ENCODE measurements at regions of chr1 and their contacts with region 1.

Region 1: DNA sequence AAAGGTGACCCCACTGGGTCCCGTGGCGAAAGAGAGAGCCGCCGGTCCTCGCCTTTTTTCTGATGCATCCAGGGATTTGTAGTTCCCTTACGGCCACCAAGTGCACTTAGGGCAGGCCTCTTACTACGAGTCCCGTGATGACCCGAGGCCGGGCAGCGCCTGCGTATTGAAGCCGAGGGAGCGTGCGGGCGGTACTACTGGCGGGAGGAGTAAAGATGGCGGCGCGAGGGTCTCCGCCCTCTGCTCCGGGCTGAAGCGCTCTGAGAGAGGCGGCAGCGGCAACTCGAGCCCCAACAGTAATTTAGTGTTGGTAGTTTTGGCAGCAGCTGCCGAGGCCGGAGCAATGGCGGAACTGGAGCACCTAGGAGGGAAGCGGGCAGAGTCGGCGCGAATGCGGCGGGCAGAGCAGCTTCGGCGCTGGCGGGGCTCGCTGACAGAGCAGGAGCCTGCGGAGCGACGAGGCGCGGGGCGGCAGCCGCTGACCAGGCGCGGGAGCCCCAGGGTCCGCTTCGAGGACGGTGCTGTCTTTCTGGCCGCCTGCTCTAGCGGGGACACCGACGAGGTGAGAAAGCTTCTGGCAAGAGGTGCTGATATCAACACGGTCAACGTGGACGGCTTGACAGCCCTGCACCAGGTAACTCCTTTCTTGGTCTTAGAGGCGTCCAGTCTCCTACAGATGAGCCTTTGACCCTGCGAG is at the start of gene PPP1R12B:
- DNase-seq: peak; percentile 90 to 98 (median 95)
- ATAC-seq: peak; percentile 96
- H3K4me3 ChIP-seq: peak within 1 kb of the TSS; percentile 89 to 96
- H3K4me3 Mint-ChIP-seq: peak within 1 kb of the TSS; percentile 86
- H3K27ac ChIP-seq: peak within 1 kb of the TSS; percentile 61 to 68
- H3K27ac Mint-ChIP-seq: peak within 1 kb of the TSS; percentile 92
- H3K4me1 ChIP-seq: peaks cover 17% of the 10 kb centered on the region
- H3K4me1 Mint-ChIP-seq: peaks cover 38% of the 10 kb centered on the region
- H3K27me3 ChIP-seq: no peaks in the 10 kb centered on the region
- H3K27me3 Mint-ChIP-seq: no peaks in the 10 kb centered on the region
- CTCF ChIP-seq: no peak
- total RNA-seq, gene PPP1R12B: 11.6 to 12.3 TPM

Region 2: DNA sequence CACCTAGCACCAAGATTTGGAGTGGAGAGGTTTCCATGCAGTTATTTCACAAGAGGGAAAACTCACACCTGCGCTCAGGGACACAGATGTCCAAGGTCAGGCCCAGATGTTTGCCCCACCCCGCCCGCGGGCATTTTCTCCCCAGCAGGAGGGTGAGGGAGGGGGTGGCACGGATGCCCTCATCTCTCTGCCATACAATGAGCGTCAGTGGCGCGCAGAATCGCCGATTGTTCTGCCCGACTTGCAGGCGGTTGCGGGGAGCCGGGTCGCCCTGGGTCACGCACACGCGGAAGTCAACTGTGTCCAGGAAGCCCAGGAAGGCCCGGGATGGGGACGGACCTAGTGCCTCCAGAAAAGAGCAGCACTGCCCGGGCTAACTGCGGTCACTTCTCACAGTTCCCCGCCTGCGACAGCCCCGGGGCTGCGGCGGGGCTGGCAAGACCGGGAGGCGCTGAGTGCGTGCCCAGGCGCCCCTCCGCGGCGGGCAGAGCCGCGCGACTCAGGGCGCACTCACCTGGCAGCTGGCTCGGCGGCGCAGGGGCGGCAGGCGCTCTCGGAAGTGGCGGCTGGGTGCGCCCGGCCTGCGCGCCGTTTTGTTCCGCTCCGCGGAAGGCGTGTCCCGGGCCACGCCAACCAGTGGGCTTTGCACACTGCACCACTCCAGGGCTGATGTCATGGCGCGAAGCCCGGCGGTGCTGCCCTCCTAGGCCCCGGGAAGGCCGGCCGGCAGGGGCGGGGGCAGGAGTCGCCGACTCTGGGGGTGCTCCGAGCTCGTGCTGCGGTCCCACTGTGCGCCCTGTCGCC is 841.9 kb before region 1 on chr1 and contains the start of gene CSRP1:
- CTCF ChIA-PET with region 1: no interaction called
- POLR2A ChIA-PET with region 1: no interaction called
- intact Hi-C with region 1: loop called in 1 of 2 experiments (anchors 10 kb)
- DNase-seq: peak; percentile 51 to 88 (median 78)
- ATAC-seq: peak; percentile 96
- H3K4me3 ChIP-seq: peak within 1 kb of the TSS; percentile 77 to 94
- H3K4me3 Mint-ChIP-seq: peak within 1 kb of the TSS; percentile 87
- H3K27ac ChIP-seq: peak within 1 kb of the TSS; percentile 65 to 70
- H3K27ac Mint-ChIP-seq: peak within 1 kb of the TSS; percentile 88
- H3K4me1 ChIP-seq: peaks cover 26% of the 10 kb centered on the region
- H3K4me1 Mint-ChIP-seq: peaks cover 50% of the 10 kb centered on the region
- H3K27me3 ChIP-seq: no peaks in the 10 kb centered on the region
- H3K27me3 Mint-ChIP-seq: no peaks in the 10 kb centered on the region
- CTCF ChIP-seq: no peak
- total RNA-seq, gene CSRP1: 31.6 to 33.9 TPM

Region 3: DNA sequence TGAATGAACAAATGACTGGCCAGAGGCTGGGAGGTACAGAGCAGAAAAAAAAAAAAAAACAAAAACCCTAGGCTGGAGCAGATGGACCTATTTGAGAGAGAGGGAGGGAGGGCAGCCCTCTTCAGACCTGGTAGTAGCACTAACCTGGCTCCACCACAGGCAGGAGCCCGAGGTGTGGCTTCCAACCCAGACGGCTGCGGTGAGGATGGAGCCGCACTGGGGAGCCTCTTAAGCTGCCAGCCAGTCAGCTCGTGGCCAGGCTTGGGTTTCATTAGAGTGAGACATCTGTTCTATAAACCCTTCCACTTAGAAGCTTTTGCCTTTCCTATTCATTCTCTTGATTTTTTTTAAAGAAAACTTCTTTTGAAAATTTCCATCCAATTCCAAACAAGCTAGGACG is 138.3 kb before region 1 on chr1:
- CTCF ChIA-PET with region 1: no interaction called
- POLR2A ChIA-PET with region 1: no interaction called
- intact Hi-C with region 1: no loop called
- DNase-seq: peak in 2 of 9 experiments; percentile 44 to 60
- ATAC-seq: peak; percentile 38
- H3K4me3 ChIP-seq: no peak overlapping the region
- H3K4me3 Mint-ChIP-seq: no peak overlapping the region
- H3K27ac ChIP-seq: no peak overlapping the region
- H3K27ac Mint-ChIP-seq: no peak overlapping the region
- H3K4me1 ChIP-seq: no peaks in the 10 kb centered on the region
- H3K4me1 Mint-ChIP-seq: peaks cover 9% of the 10 kb centered on the region
- H3K27me3 ChIP-seq: peaks cover 4 to 7% of the 10 kb centered on the region in 2 experiments
- H3K27me3 Mint-ChIP-seq: peaks cover 37% of the 10 kb centered on the region
- CTCF ChIP-seq: no peak

Region 4: DNA sequence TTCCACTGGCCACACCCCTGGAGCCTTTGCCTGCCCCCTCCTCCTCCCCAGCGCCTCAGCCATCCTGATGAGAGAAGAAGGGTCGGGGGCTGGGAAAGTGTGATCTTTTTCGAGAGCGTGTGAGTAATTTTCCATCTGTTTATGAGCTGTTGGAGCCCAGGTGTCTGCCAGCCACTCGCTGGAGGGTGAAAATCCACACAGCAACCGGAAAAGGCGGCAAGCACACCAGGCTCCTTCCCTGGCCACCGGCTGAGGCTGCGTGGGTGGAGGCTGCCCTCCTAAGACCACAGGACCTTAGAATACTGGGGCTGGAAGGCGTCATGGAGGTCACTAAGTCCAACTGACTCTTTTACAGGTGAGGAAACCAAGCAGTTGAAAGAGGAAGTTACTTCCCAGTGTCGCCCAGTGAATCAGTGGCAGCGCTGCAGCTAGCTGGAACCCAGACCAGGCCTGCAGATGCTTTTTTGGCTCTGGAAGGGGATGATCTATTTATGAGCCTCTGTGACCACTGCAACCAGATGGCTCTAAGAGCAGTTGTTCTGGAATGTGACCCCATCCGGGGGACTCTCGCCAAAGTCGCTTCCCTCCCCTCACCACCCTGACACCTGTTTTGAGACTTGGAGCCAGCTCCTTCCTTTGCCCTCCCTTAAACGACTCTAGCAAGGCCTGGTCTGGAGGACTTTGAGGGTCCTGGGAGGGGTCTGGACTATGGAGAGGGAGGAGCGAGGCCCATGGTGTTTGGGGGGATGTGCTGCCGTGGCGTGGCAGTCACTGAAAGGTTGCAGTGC is 100.6 kb before region 1 on chr1:
- CTCF ChIA-PET with region 1: no interaction called
- POLR2A ChIA-PET with region 1: no interaction called
- intact Hi-C with region 1: no loop called
- DNase-seq: no peak
- ATAC-seq: no peak
- H3K4me3 ChIP-seq: no peak overlapping the region
- H3K4me3 Mint-ChIP-seq: no peak overlapping the region
- H3K27ac ChIP-seq: no peak overlapping the region
- H3K27ac Mint-ChIP-seq: no peak overlapping the region
- H3K4me1 ChIP-seq: no peaks in the 10 kb centered on the region
- H3K4me1 Mint-ChIP-seq: no peaks in the 10 kb centered on the region
- H3K27me3 ChIP-seq: no peaks in the 10 kb centered on the region
- H3K27me3 Mint-ChIP-seq: peaks cover 2% of the 10 kb centered on the region
- CTCF ChIP-seq: no peak

Region 5: DNA sequence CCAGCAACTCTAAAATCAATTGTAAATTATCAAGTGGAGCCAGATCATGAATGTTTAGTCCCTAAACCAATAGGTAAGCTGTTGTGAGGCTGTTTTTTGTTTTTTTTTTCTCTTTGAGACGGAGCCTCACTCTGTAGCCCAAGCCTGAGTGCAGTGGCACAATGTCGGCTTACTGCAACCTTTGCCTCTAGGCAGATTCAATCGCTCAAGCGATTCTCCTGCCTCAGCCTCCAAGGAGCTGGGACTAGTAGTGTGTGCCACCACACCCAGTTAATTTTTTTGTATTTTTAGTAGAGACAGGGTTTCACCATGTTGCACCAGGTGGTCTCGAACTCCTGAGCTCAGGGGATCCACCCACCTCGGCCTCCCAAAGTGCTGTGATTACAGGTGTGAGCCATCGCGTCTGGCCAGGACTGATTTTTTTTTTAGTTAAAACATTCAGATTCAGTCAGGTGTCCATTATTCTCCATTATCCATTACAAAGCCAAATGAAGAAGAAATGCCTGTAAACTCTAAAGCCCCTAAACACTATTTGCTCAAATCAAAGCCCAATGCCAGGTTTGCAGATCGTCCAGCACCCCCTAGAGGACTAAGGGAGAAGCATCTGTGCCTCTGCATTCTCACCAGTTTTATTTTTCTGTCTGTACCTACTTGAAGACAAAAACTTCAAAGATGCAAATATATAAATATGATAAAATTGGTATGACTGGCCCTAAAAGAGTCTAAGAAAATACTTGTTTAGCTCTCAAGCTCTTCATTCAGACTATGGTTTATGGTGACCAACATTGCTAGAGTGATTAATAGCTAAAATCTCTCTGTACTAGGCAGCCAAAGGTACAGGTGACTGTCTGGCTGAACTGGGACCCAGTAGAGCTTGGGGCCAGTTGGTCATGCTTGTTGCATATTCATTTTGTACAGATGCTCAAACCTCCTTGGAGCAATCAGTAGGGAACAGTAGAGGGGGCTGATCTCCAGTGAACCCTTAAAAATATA is 223.0 kb after region 1 on chr1:
- CTCF ChIA-PET with region 1: interaction called, 3 read pairs
- POLR2A ChIA-PET with region 1: no interaction called
- intact Hi-C with region 1: loop called (anchors 1 to 5 kb)
- DNase-seq: peak in 2 of 9 experiments; percentile 37 to 43
- ATAC-seq: no peak
- H3K4me3 ChIP-seq: no peak overlapping the region
- H3K4me3 Mint-ChIP-seq: no peak overlapping the region
- H3K27ac ChIP-seq: no peak overlapping the region
- H3K27ac Mint-ChIP-seq: no peak overlapping the region
- H3K4me1 ChIP-seq: no peaks in the 10 kb centered on the region
- H3K4me1 Mint-ChIP-seq: no peaks in the 10 kb centered on the region
- H3K27me3 ChIP-seq: no peaks in the 10 kb centered on the region
- H3K27me3 Mint-ChIP-seq: no peaks in the 10 kb centered on the region
- CTCF ChIP-seq: peak; percentile 68

Region 6: DNA sequence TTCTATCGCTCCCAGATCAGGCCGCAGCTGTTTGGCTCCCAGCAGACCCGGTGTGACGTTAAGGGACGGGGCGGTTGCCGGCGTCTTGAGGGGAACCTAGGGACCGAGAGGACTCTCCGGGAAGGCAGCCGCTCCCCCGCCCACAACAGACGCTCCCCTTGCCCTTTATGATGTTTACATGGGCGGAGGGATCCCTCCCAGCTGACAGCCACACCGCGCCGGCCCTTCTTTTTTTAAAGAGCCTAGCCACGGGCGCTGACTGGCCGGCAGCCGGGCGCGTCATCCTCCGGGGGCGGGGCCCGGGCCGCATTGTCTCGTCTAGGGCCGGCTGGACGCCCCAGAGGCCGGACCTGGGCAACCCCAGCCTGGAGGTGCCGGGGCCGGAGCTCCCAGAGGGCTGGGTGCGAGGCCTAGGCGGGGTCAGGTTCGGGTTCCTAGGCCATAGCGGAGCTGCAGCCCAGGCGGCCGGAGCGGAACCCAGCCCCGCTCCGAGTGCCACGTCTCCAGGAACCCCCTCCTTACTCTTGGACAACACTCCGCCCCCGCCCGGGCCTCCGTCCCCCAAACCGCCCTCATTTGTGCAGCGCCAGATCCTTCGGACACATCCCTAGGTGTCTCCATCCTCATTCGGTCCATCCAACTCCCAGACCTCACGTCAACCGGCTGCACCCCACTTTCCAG is 462.1 kb after region 1 on chr1 and contains the start of gene PCAT6:
- CTCF ChIA-PET with region 1: no interaction called
- POLR2A ChIA-PET with region 1: no interaction called
- intact Hi-C with region 1: loop called (anchors 2 to 5 kb)
- DNase-seq: peak; percentile 67 to 93 (median 84)
- ATAC-seq: peak; percentile 67
- H3K4me3 ChIP-seq: peak within 1 kb of the TSS; percentile 80 to 94
- H3K4me3 Mint-ChIP-seq: peak within 1 kb of the TSS; percentile 88
- H3K27ac ChIP-seq: peak within 1 kb of the TSS; percentile 51 to 72
- H3K27ac Mint-ChIP-seq: peak within 1 kb of the TSS; percentile 90
- H3K4me1 ChIP-seq: peaks cover 20% of the 10 kb centered on the region
- H3K4me1 Mint-ChIP-seq: peaks cover 34% of the 10 kb centered on the region
- H3K27me3 ChIP-seq: no peaks in the 10 kb centered on the region
- H3K27me3 Mint-ChIP-seq: no peaks in the 10 kb centered on the region
- CTCF ChIP-seq: no peak
- total RNA-seq, gene PCAT6: 0.92 to 1.6 TPM

Region 7: GRCh38 chr1:202968840-202969295 is 620.2 kb after region 1 on chr1:
- CTCF ChIA-PET with region 1: no interaction called
- POLR2A ChIA-PET with region 1: no interaction called
- intact Hi-C with region 1: loop called (anchors 2 to 5 kb)
- DNase-seq: peak in 4 of 9 experiments; percentile 14 to 64 (median 40)
- ATAC-seq: peak; percentile 19
- H3K4me3 ChIP-seq: no peak overlapping the region
- H3K4me3 Mint-ChIP-seq: peak overlapping the region; percentile 49
- H3K27ac ChIP-seq: no peak overlapping the region
- H3K27ac Mint-ChIP-seq: no peak overlapping the region
- H3K4me1 ChIP-seq: peaks cover 24% of the 10 kb centered on the region
- H3K4me1 Mint-ChIP-seq: peaks cover 32% of the 10 kb centered on the region
- H3K27me3 ChIP-seq: no peaks in the 10 kb centered on the region
- H3K27me3 Mint-ChIP-seq: no peaks in the 10 kb centered on the region
- CTCF ChIP-seq: peak; percentile 28

Region 8: DNA sequence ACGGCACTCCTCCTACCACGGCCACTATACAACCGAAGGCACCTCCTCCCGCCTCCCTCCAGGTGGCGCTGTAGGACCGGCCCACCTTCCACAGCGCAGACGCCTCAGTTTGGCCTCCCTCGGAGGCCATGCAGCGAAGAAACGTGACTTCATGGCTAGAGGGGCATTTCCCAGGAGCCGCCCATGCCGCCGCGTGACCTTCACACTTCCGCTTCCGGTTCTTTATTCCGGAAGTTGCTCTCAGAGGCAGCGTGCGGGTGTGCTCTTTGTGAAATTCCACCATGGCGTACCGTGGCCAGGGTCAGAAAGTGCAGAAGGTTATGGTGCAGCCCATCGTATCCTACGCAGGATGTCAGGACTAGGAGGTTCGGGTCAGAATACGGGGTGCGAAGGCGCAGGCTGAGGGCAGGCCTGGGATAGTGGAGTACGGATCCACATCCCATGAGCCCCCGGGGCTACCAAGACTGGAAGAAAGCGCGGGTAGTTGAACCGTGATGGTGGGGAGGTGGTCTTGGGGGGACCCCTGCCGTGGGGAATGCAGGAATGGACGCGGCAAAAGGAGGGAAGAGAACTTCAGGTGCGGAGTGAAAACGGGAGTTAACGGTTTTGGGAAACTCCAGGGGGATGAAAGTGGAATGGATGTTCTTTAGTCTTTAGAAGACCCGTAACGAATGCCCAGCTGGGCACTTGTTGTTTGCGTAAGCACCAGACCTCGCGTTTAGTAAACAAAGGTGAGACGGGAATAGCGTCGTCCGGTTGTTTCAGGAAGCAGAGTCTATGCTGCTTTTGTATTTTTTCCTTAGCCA is 1512.9 kb after region 1 on chr1 and contains the start of gene SNRPE:
- CTCF ChIA-PET with region 1: no interaction called
- POLR2A ChIA-PET with region 1: no interaction called
- intact Hi-C with region 1: loop called in 1 of 2 experiments (anchors 5 kb)
- DNase-seq: peak; percentile 91 to 99 (median 96)
- ATAC-seq: peak; percentile 98
- H3K4me3 ChIP-seq: peak within 1 kb of the TSS; percentile 92 to 97
- H3K4me3 Mint-ChIP-seq: peak within 1 kb of the TSS; percentile 97
- H3K27ac ChIP-seq: peak within 1 kb of the TSS; percentile 80 to 86
- H3K27ac Mint-ChIP-seq: peak within 1 kb of the TSS; percentile 96
- H3K4me1 ChIP-seq: peaks cover 11% of the 10 kb centered on the region
- H3K4me1 Mint-ChIP-seq: peaks cover 21% of the 10 kb centered on the region
- H3K27me3 ChIP-seq: no peaks in the 10 kb centered on the region
- H3K27me3 Mint-ChIP-seq: no peaks in the 10 kb centered on the region
- CTCF ChIP-seq: peak; percentile 91
- total RNA-seq, gene SNRPE: 66.5 to 84.0 TPM